ENCODE measurements at regions of chr12 and their contacts with region 1.

Region 1: DNA sequence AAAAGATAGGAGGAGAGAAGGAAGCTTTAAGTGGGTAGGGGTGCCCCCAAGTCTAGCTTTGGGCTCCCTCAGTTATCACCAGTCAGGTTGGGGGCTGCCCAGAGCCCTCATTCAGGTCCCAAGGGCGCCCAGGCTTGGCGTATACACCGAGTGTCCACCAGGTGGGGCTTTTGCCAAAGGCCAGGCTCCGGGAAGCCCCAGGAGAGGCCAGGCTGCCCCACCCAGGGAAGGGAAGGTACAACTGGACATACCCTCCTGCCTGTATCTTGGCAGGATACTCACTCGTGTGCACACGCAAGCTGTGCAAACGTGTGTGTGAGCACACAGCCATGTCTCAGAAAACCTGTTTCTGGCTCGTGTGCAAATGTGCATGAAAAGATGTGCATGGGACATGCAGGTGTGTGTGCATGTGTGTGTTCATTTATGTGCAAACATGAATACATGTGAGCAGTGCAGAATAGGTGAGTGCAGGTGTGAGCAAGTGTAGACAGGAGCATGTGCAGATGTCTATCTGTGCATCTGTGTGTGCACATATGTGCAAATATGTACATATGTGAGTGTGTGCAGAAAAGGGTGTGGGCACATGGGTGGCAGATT is 103.9 kb upstream of the MYL2 start:
- DNase-seq: peak; percentile 69
- H3K4me3 Mint-ChIP-seq: no peak overlapping the region
- H3K27ac Mint-ChIP-seq: no peak overlapping the region
- H3K4me1 Mint-ChIP-seq: no peaks in the 10 kb centered on the region
- H3K27me3 Mint-ChIP-seq: peaks cover 57% of the 10 kb centered on the region
- CTCF ChIP-seq: peak; percentile 88

Region 2: DNA sequence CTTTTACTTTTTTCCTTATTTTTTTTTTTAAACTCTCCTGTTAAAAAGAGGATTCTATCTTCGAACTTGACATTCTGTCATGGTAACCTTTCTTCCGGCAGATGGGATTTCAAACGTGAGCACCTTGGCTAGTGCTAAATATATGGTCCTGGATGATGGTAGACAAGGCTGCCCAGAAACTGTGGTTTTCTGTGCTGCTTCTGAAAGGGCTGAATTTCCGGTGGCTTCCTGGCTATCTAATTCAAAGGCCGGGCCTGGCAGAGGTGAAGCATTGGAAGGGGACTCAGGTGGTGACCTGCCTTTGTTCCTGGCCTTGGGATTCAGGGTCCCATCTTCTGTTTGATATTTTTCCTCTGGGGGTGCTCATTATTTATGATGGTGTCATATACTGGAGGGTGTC is 14.6 kb after region 1 on chr12:
- CTCF ChIA-PET with region 1: no interaction called
- POLR2A ChIA-PET with region 1: no interaction called
- intact Hi-C with region 1: no loop called
- DNase-seq: no peak
- H3K4me3 Mint-ChIP-seq: no peak overlapping the region
- H3K27ac Mint-ChIP-seq: no peak overlapping the region
- H3K4me1 Mint-ChIP-seq: peaks cover 12% of the 10 kb centered on the region
- H3K27me3 Mint-ChIP-seq: peaks cover 47% of the 10 kb centered on the region
- CTCF ChIP-seq: no peak

Region 3: DNA sequence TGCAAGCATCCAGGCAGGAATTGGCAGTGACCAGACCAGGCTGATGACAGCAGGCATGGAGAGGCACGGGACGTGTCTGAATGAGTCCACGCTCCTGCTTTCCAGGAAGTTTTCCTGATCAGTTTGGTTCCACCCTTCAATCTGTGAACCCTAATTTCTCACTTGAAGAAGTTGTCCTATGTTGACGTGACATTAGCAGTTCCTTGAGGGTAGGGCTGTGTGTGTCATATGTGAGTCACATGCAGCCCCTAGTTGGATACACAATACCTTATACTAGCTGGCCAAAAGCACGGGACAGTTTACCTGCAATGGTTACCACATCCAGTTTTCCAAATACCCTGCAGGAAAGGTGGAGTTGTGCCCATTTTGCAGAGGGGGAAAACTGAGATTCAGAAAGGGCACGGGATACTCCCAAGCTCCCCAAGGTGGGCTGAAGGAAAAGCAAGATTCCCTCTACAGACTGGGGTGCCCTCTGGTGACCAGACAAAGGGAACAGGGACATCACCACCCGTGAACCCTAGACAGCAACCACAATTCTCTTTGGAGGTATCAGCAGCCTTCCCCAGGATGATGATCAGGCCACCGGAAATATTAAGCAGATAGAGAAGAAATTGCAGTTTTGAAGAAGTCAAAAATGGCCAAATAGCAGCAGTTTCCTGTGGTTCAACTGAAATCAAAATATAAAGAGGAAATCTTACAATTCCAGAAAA is 150.1 kb after region 1 on chr12:
- CTCF ChIA-PET with region 1: interaction called, 8 read pairs
- POLR2A ChIA-PET with region 1: no interaction called
- intact Hi-C with region 1: loop called (anchors 1 kb)
- DNase-seq: peak; percentile 27
- H3K4me3 Mint-ChIP-seq: no peak overlapping the region
- H3K27ac Mint-ChIP-seq: no peak overlapping the region
- H3K4me1 Mint-ChIP-seq: no peaks in the 10 kb centered on the region
- H3K27me3 Mint-ChIP-seq: peaks cover 64% of the 10 kb centered on the region
- CTCF ChIP-seq: no peak

Region 4: GRCh38 chr12:111274777-111275176 is 250.5 kb after region 1 on chr12:
- CTCF ChIA-PET with region 1: interaction called, 78 read pairs
- POLR2A ChIA-PET with region 1: no interaction called
- intact Hi-C with region 1: loop called (anchors 1 kb)
- DNase-seq: peak; percentile 14
- H3K4me3 Mint-ChIP-seq: no peak overlapping the region
- H3K27ac Mint-ChIP-seq: no peak overlapping the region
- H3K4me1 Mint-ChIP-seq: peaks cover 16% of the 10 kb centered on the region
- H3K27me3 Mint-ChIP-seq: peaks cover 34% of the 10 kb centered on the region
- CTCF ChIP-seq: peak; percentile 27

Region 5: GRCh38 chr12:111298582-111299436 is 274.5 kb after region 1 on chr12:
- CTCF ChIA-PET with region 1: interaction called, 102 read pairs
- POLR2A ChIA-PET with region 1: interaction called, 3 read pairs
- intact Hi-C with region 1: loop called (anchors 1 kb)
- DNase-seq: peak; percentile 63
- H3K4me3 Mint-ChIP-seq: no peak overlapping the region
- H3K27ac Mint-ChIP-seq: no peak overlapping the region
- H3K4me1 Mint-ChIP-seq: no peaks in the 10 kb centered on the region
- H3K27me3 Mint-ChIP-seq: no peaks in the 10 kb centered on the region
- CTCF ChIP-seq: peak; percentile 84

Region 6: DNA sequence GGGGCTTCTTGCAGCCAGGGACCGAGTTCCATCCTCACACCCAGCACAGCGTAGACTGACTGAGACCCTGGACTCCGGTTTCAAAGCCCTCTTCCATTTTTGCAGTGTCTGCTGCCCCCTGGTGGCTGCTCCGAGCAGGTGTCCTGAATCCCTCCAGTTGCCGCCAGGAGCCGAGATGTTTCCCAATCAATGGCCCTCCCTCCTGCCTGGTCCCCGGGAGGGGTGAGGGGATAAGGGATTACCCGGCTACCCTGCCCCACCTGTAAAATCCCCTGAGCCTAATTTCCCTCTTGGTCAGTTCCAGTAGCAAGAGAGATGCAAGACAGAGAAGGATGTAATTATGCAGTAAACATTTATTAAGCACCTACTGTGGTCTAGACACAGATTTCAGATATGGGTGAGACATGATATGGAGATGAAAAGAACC is 289.5 kb after region 1 on chr12:
- CTCF ChIA-PET with region 1: interaction called, 7 read pairs
- POLR2A ChIA-PET with region 1: no interaction called
- intact Hi-C with region 1: loop called (anchors 1 kb)
- DNase-seq: peak; percentile 75
- H3K4me3 Mint-ChIP-seq: no peak overlapping the region
- H3K27ac Mint-ChIP-seq: no peak overlapping the region
- H3K4me1 Mint-ChIP-seq: peaks cover 6% of the 10 kb centered on the region
- H3K27me3 Mint-ChIP-seq: no peaks in the 10 kb centered on the region
- CTCF ChIP-seq: peak; percentile 91